Activated naive CD4-positive, alpha-beta T cell treated with anti-CD3 and anti-CD28 coated beads for 36 hours (primary cell): ENCODE measurements at regions of chr15 and their contacts with region 1.

Region 1: DNA sequence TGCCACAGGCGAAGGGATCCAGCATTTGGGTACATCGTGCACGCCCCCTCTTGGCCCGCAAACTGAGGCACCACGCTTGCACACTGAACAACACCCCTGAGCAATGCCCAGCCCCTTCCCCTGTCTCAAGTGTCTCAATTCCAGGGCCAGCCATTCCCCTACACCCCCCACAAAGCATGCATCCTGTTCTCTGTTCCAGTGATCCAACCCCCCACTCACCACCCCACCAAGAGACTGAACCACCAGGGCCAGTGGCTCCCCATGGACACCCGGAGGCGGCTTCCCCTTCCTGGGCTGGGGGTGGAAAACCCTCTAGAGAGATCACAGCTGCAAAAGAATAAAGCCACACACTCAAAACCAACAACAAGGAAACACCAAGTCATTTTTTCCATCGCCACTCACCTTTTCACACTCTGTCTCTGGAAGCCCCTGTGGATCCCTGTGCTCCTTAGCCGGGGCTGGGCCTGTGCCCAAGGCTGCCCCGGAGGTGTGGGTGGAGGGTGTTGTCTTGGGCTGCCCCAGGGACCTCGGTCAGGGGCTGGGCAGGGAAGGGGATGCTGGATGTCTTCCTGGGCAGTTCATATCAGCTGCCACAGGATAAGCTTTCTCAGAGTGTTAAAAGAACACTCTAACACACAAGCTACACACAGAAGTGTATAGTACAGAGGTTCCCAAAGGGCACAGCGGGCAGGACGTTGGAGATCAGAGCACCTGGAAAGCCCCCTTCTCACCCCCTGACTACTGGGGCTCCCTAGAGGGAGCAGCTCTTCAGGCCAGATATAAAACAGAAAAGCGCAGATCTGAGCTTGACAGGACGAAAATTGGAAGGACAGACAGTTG is 92.5 kb downstream of the CHSY1 start:
- DNase-seq: peak; percentile 63
- H3K4me3 Mint-ChIP-seq: no peak overlapping the region
- H3K27ac Mint-ChIP-seq: peak overlapping the region; percentile 35
- H3K4me1 Mint-ChIP-seq: peaks cover 25% of the 10 kb centered on the region
- H3K27me3 Mint-ChIP-seq: no peaks in the 10 kb centered on the region

Region 2: GRCh38 chr15:100663086-100663914 is 496.0 kb before region 1 on chr15:
- CTCF ChIA-PET with region 1: no interaction called
- intact Hi-C with region 1: no loop called
- DNase-seq: no peak
- H3K4me3 Mint-ChIP-seq: no peak overlapping the region
- H3K27ac Mint-ChIP-seq: no peak overlapping the region
- H3K4me1 Mint-ChIP-seq: no peaks in the 10 kb centered on the region
- H3K27me3 Mint-ChIP-seq: peaks cover 4% of the 10 kb centered on the region

Region 3: DNA sequence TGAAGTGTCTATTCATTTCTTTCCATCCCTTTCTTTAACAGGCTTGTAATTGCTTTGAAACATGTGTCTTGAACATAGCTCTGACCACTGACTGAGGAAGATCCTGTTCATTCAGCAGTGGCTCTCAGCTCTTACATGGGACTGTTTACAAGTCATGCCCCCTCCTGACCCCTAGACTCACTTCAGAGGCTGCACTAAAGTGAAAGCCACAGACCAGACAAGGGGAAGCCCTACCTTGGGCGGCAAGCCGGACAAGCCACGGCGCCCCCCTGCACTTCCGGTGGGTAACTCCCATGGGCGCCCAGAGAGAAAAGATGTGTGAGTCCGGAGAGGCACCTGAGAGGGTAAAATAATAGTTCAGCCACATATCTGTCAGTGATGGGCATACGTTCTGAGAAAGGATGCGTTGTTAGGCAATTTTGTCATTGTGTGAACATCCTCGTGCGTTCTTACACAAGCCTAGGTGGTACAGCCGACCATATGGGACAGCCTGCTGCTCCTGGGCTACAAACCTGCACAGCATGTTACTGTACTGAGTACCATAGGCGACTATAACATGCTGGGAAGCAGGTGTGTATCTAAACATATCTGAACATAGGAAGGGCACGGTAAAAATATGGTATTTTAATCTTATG is 23.7 kb before region 1 on chr15:
- CTCF ChIA-PET with region 1: no interaction called
- intact Hi-C with region 1: loop called (anchors 2 kb)
- DNase-seq: no peak
- H3K4me3 Mint-ChIP-seq: no peak overlapping the region
- H3K27ac Mint-ChIP-seq: no peak overlapping the region
- H3K4me1 Mint-ChIP-seq: peaks cover 19% of the 10 kb centered on the region
- H3K27me3 Mint-ChIP-seq: peaks cover 8% of the 10 kb centered on the region

Region 4: GRCh38 chr15:101188637-101189408 is 29.5 kb after region 1 on chr15:
- CTCF ChIA-PET with region 1: interaction called, 3 read pairs
- intact Hi-C with region 1: loop called (anchors 1 kb)
- DNase-seq: no peak
- H3K4me3 Mint-ChIP-seq: peak overlapping the region; percentile 1
- H3K27ac Mint-ChIP-seq: peak overlapping the region; percentile 73
- H3K4me1 Mint-ChIP-seq: peaks cover 75% of the 10 kb centered on the region
- H3K27me3 Mint-ChIP-seq: no peaks in the 10 kb centered on the region

Region 5: DNA sequence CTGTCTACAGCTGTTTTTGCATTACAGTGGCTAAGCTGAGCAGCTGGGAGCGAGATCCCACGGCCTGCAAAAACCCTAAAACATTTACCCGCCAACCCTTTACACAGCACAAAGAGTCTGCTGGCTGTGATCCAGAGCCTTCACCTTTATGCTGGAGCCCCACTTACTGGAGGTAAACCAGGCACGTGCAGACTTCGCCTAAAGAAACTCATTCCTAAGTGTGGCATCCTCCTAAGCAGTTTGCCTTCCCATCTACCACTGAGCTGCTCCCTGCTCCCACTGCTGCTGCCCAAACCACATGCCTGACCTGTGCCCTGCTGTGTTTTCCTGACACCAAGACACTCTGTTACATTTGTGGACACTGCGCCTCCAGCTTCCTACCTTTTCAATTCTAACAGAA is 39.5 kb after region 1 on chr15:
- CTCF ChIA-PET with region 1: interaction called, 3 read pairs
- intact Hi-C with region 1: loop called (anchors 1 kb)
- DNase-seq: no peak
- H3K4me3 Mint-ChIP-seq: peak overlapping the region; percentile 48
- H3K27ac Mint-ChIP-seq: peak overlapping the region; percentile 85
- H3K4me1 Mint-ChIP-seq: peaks cover 81% of the 10 kb centered on the region
- H3K27me3 Mint-ChIP-seq: no peaks in the 10 kb centered on the region

Region 6: DNA sequence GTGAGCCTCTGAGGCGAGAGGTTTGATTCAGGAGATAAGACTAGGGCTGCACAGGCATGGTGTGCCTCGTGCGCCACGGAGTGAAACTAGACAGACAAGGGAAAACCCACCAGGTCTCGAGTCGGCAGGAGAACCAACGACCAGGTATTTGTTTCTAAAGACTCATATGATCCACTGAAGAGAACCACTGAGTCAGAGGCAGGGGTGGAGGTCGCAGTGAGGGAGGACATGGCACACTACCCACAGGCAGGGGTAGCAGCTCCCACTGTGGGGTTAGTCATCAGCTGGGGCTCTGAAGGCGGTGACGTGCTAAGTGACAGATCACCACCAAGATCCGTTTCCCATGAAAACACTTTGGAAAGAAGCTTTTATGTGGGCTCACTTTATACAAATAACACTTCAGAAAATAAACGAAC is 46.9 kb after region 1 on chr15:
- CTCF ChIA-PET with region 1: no interaction called
- intact Hi-C with region 1: loop called (anchors 1 kb)
- DNase-seq: peak; percentile 89
- H3K4me3 Mint-ChIP-seq: peak overlapping the region; percentile 72
- H3K27ac Mint-ChIP-seq: peak overlapping the region; percentile 92
- H3K4me1 Mint-ChIP-seq: peaks cover 83% of the 10 kb centered on the region
- H3K27me3 Mint-ChIP-seq: no peaks in the 10 kb centered on the region